Activated T-helper 1 cell treated with anti-CD3 and anti-CD28 coated beads, Interleukin-12 subunit alpha, Interleukin-12 subunit beta, Interleukin-2, Interleukin-4 antibody, amounts not matched to agents 30 ng/mL and 10 ng/mL and 1 ng/mL, durations not matched to agents 14 hours and 24 hours and 36 hours (primary cell): ENCODE measurements at regions of chr10 and their contacts with region 1.

Region 1: DNA sequence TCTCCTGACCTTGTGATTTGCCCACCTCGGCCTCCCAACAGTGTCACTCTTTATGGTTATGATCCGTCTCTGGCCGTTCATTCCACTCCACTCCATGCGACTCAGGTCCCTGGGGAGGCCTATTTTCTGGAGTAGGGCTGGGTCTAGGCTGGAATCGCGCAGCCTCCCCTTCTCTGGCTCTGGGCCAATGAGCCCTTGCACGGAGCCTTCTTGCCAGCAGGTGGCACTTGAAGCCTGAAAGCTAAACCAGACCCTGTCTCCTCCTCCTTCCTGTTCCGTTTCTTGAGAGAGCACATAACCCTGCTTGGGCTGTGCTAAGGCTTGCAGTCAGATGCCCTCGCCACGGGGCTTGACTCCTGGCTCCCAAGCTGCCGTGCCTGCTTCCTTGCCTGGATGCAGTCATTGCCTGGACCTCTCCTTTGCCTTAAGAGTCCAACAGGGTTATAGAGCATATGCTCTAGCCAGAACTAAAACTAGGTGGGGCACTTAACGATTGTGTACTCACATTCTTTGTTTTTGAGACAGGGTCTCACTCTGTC is 9.6 kb upstream of the DNAJB12 start:
- DNase-seq: peak; percentile 77
- H3K4me3 Mint-ChIP-seq: no peak overlapping the region
- H3K27ac Mint-ChIP-seq: peak overlapping the region; percentile 51
- H3K4me1 Mint-ChIP-seq: peaks cover 27% of the 10 kb centered on the region
- H3K27me3 Mint-ChIP-seq: peaks cover 6% of the 10 kb centered on the region

Region 2: DNA sequence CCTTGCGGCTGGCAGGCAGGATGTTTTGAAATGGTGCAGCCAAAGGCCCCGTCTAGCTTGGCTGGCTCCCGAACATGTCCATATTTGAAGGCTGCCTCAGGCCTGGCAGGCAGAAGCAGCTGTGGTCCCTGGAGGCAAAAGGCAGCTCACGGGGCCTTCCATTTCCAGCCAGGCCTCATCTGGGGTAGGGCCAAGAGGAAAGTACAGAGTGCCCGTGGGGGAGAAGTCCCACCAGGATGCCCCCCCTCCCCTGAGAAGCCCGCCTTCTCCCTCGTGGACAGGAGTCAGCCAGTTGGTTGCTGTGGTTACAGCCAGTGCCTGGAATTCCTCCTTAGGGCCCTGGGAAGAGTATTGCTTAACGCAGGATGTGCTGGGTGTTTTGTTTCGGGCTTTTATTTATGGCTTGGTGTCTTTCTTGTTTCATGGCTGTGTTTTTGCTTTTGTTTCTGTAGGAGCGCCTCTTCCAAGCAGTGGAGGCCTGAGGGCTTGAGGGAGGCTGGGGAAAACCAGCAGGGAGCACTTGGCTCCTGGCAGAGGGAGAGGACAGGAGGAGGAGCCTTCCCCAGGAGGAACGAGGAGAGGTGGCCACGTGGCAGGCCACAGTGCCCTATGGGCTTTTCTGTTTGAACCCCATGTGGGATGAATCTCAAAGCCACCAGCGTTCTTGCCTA is 354.8 kb before region 1 on chr10:
- intact Hi-C with region 1: no loop called
- DNase-seq: no peak
- H3K4me3 Mint-ChIP-seq: no peak overlapping the region
- H3K27ac Mint-ChIP-seq: no peak overlapping the region
- H3K4me1 Mint-ChIP-seq: no peaks in the 10 kb centered on the region
- H3K27me3 Mint-ChIP-seq: no peaks in the 10 kb centered on the region

Region 3: GRCh38 chr10:72419241-72419640 is 54.9 kb after region 1 on chr10:
- intact Hi-C with region 1: no loop called
- DNase-seq: no peak
- H3K4me3 Mint-ChIP-seq: no peak overlapping the region
- H3K27ac Mint-ChIP-seq: no peak overlapping the region
- H3K4me1 Mint-ChIP-seq: no peaks in the 10 kb centered on the region
- H3K27me3 Mint-ChIP-seq: no peaks in the 10 kb centered on the region

Region 4: DNA sequence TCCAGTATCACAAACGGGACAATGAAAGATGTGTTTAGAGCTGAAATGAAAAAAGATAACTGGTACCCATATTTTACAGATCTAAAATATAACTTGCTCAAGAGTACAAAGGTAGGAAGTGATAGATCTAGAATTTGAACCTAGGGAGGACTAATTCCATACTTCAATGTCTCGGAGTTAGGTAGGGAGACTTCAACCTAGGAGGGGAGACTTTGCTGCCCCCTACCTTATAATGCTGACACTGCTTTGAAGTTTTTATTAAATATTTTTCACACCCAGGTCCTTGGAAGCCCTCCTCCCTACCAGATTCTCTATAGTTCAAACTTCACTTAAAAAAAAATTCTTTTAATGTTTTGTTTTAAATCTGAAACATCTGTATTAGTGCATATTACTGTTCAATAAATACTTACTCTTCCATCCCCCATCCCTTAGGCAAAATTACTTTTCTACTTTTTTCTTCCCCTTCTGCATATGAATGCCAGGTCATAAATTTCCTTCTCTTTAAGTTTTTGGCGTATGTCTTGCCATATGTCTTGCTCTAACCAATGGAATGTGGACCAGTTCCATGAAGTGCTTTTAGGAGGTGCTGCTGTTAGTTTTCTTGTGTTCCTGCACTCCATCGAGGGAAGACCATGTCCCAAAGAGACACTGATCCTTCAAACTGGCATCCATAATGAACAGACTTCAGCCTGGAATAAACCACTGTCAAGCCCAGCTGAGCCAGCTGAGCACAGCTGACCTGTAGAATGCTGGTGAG is 203.8 kb after region 1 on chr10:
- intact Hi-C with region 1: loop called (anchors 1 kb)
- DNase-seq: no peak
- H3K4me3 Mint-ChIP-seq: no peak overlapping the region
- H3K27ac Mint-ChIP-seq: no peak overlapping the region
- H3K4me1 Mint-ChIP-seq: peaks cover 28% of the 10 kb centered on the region
- H3K27me3 Mint-ChIP-seq: no peaks in the 10 kb centered on the region

Region 5: GRCh38 chr10:72625608-72626443 is 261.5 kb after region 1 on chr10 and contains the start of gene MICU1:
- intact Hi-C with region 1: loop called (anchors 2 kb)
- DNase-seq: peak; percentile 93
- H3K4me3 Mint-ChIP-seq: peak within 1 kb of the TSS; percentile 96
- H3K27ac Mint-ChIP-seq: peak within 1 kb of the TSS; percentile 94
- H3K4me1 Mint-ChIP-seq: peaks cover 13% of the 10 kb centered on the region
- H3K27me3 Mint-ChIP-seq: peaks cover 6% of the 10 kb centered on the region
- total RNA-seq, gene MICU1: 28.4 and 29.5 TPM in 2 replicates

Region 6: DNA sequence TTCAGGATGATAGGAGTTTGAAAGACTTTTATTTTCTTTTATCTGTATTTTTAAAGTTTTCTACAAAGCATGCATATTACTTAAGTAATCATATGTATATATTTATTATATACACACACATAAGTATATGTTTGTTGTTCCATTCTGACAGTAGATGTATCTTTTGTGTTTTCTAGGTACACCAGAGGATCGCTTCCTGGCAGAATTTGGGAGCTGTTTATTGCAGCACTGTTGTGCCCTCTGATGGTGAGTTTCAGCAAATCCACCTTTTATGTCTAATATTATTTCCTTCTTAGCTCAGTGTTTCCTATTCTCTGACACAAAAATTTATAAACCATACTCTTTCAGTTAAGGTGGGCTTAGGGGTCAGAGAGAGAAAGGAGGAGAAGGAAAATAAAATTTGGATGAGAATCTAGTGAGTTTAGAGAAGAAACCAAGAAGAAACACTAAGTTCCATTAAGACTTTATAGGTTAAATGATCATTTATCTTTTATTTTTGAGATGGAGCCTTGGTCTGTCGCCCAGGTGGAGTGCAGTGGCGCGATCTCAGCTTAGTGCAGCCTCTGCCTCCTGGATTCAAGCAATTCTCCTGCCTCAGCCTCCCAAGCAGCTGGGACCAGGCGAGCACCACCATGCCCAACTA is 470.0 kb after region 1 on chr10:
- intact Hi-C with region 1: loop called (anchors 1 kb)
- DNase-seq: peak; percentile 14
- H3K4me3 Mint-ChIP-seq: no peak overlapping the region
- H3K27ac Mint-ChIP-seq: no peak overlapping the region
- H3K4me1 Mint-ChIP-seq: no peaks in the 10 kb centered on the region
- H3K27me3 Mint-ChIP-seq: no peaks in the 10 kb centered on the region

Region 7: GRCh38 chr10:72875250-72876055 is 511.1 kb after region 1 on chr10:
- intact Hi-C with region 1: loop called (anchors 1 kb)
- DNase-seq: no peak
- H3K4me3 Mint-ChIP-seq: no peak overlapping the region
- H3K27ac Mint-ChIP-seq: no peak overlapping the region
- H3K4me1 Mint-ChIP-seq: no peaks in the 10 kb centered on the region
- H3K27me3 Mint-ChIP-seq: no peaks in the 10 kb centered on the region

Region 8: GRCh38 chr10:73060738-73061635 is 696.7 kb after region 1 on chr10:
- intact Hi-C with region 1: loop called (anchors 1 kb)
- DNase-seq: no peak
- H3K4me3 Mint-ChIP-seq: no peak overlapping the region
- H3K27ac Mint-ChIP-seq: peak overlapping the region; percentile 18
- H3K4me1 Mint-ChIP-seq: peaks cover 19% of the 10 kb centered on the region
- H3K27me3 Mint-ChIP-seq: no peaks in the 10 kb centered on the region

Region 9: DNA sequence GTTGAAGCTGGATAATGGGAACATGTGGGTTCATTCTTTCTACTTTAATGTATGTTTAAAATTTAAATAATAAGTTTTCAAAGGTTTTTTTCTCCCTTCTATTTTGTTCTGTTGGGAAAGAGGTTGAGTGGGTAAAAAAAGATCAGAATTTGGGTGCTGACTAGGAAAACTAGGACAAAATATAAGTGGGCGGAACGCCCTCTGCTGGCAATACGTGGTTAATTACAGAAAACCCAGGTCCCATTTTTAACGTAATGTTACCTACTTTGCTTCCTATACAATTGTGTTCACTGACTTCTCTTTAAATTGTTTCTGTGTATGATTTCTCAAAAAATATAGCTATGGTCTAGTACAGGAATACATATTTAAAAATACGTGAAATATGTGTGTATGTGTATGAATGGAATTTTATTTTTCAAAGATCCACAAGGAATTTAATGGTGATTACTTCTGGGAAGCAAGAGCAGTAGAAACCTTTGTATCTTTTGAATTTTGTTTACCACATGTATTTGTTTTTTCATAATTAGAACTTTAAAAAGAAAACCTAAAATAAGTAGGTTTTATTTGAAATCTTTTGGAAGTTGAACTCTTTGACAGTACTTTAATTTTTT is 794.8 kb after region 1 on chr10:
- intact Hi-C with region 1: loop called (anchors 1 kb)
- DNase-seq: peak; percentile 21
- H3K4me3 Mint-ChIP-seq: no peak overlapping the region
- H3K27ac Mint-ChIP-seq: no peak overlapping the region
- H3K4me1 Mint-ChIP-seq: peaks cover 40% of the 10 kb centered on the region
- H3K27me3 Mint-ChIP-seq: no peaks in the 10 kb centered on the region